Activated CD8-positive, alpha-beta memory T cell treated with anti-CD3 and anti-CD28 coated beads, Interleukin-2, amount 10 ng/mL, durations not matched to agents 7 days and 5 days (primary cell): ENCODE measurements at regions of chr16 and their contacts with region 1.

Region 1: DNA sequence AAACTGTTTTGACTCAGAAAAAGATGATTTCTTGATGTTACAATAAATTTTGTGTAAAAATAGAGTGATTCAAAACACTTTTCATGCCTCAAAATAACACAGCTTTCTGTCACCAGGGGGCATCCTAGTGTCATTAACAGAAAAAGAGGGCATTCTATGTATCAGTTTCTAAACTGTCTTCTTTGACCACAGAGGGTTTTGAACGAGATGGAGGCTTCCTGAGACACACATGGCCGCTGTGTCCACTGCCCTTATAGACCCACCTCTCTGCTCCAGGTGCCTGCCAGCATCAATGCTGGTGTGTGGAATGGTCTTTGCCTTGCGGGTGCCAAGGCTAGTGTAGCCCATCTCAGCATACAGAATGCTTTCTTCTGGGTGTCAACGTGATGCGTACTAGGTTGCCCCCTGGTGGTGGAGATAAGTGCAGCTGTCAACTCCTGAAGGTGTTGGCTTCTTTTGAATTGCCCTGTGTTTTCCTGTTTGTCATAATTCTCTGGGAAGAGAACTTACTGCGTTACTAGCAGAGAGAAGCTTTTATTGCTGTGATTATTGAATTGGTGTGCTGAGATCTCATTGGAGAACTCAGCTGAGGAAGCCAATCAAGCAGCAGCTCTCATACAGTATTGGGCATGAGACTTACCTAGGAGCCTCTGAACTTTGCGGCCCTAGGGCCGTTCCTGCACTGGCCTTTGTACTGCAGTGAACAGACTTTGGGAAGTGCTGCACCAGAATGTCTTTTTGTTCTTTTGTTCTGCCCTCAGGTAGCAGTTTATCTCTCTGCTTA is 38.6 kb downstream of the USP10 start:
- DNase-seq: peak; percentile 87
- ATAC-seq: peak; percentile 88
- H3K4me3 Mint-ChIP-seq: peak overlapping the region; percentile 54
- H3K27ac Mint-ChIP-seq: peak overlapping the region; percentile 64
- H3K4me1 Mint-ChIP-seq: peaks cover 59% of the 10 kb centered on the region
- H3K27me3 Mint-ChIP-seq: no peaks in the 10 kb centered on the region

Region 2: DNA sequence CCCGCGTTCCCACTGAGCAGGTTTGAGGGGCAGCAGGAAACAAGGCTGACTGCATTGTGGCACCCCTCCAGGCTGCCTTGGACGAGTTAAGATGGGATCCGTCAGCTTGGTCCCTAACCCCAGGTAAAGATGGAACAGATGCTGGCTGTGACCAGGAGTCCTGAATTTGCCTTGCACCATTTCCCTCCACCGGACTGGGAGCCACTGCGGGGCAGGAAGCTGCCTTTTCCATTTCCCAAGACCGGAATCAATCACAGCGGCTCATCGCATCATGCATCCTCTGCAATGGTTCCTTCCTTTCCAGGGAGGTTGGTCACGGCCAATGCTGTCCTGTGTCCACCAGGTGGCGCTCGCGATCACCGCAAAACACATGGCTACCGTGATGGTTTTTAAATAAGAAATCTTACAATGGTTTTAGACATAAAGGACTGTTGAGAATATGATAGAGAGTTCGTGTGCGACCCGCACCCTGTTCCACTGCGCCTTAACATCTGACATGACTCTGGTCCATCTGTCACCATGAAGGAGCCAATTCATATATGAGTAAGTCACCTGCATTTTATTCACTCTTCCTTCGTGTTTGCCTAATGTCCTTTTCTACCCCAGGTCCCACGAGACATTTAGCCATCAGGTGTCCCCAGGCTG is 227.1 kb before region 1 on chr16:
- CTCF ChIA-PET with region 1: interaction called, 16 read pairs
- DNase-seq: peak; percentile 92
- ATAC-seq: peak; percentile 16
- H3K4me3 Mint-ChIP-seq: peak overlapping the region; percentile 39
- H3K27ac Mint-ChIP-seq: peak overlapping the region; percentile 87
- H3K4me1 Mint-ChIP-seq: peaks cover 86% of the 10 kb centered on the region
- H3K27me3 Mint-ChIP-seq: no peaks in the 10 kb centered on the region

Region 3: GRCh38 chr16:84617791-84618580 is 120.5 kb before region 1 on chr16 and contains the start of gene COTL1:
- CTCF ChIA-PET with region 1: interaction called, 56 read pairs
- DNase-seq: peak; percentile 97
- ATAC-seq: peak; percentile 86
- H3K4me3 Mint-ChIP-seq: peak within 1 kb of the TSS; percentile 96
- H3K27ac Mint-ChIP-seq: peak within 1 kb of the TSS; percentile 87
- H3K4me1 Mint-ChIP-seq: peaks cover 41% of the 10 kb centered on the region
- H3K27me3 Mint-ChIP-seq: peaks cover 13% of the 10 kb centered on the region
- total RNA-seq, gene COTL1: 1,052 to 1,190 TPM

Region 4: DNA sequence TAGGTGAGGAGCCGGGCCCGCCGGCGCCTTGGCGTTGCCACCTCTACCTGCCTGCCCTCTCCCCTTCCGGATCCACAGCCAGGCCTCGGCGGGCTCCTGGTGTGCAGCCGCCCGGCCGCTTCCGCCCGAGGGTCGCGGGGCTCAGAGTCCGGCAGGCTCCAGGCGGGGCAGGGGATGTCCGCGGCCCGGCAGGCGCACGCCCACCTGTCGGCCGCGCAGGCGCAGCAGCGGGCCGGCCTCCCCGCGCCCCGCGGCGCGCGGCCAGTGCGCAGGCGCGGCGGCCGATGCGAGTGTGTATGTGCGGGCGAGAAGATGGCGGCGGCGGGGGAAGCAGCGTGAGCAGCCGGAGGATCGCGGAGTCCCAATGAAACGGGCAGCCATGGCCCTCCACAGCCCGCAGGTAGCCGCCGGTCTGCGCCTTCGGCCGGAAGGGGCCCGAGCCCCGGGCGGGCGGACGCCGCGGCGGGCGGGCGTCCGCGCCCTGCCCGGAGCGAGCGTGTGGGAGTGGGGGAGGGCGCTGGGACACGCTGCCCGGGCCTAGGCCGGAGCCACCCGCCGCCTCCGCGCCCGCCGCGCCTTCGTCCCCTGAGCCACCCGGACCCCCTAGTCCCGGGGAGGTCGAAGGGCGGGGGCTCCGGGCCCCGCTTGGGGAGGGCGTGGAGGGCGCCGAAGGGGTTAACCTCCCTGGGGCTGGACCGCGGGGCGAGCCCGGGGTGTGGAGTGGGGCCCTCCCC is 38.6 kb before region 1 on chr16 and contains the start of gene USP10:
- CTCF ChIA-PET with region 1: interaction called, 20 read pairs
- DNase-seq: peak; percentile 85
- ATAC-seq: peak; percentile 90
- H3K4me3 Mint-ChIP-seq: peak within 1 kb of the TSS; percentile 98
- H3K27ac Mint-ChIP-seq: peak within 1 kb of the TSS; percentile 96
- H3K4me1 Mint-ChIP-seq: peaks cover 40% of the 10 kb centered on the region
- H3K27me3 Mint-ChIP-seq: no peaks in the 10 kb centered on the region
- total RNA-seq, gene USP10: 90.9 to 117 TPM

Region 5: GRCh38 chr16:84754353-84754856 is 16.0 kb after region 1 on chr16:
- CTCF ChIA-PET with region 1: interaction called, 294 read pairs
- DNase-seq: peak; percentile 85
- ATAC-seq: peak; percentile 77
- H3K4me3 Mint-ChIP-seq: peak overlapping the region; percentile 62
- H3K27ac Mint-ChIP-seq: peak overlapping the region; percentile 83
- H3K4me1 Mint-ChIP-seq: peaks cover 71% of the 10 kb centered on the region
- H3K27me3 Mint-ChIP-seq: no peaks in the 10 kb centered on the region

Region 6: GRCh38 chr16:84952335-84953189 is 214.1 kb after region 1 on chr16:
- CTCF ChIA-PET with region 1: interaction called, 14 read pairs
- DNase-seq: peak; percentile 77
- ATAC-seq: peak; percentile 85
- H3K4me3 Mint-ChIP-seq: no peak overlapping the region
- H3K27ac Mint-ChIP-seq: no peak overlapping the region
- H3K4me1 Mint-ChIP-seq: no peaks in the 10 kb centered on the region
- H3K27me3 Mint-ChIP-seq: peaks cover 3% of the 10 kb centered on the region